CD4-positive, alpha-beta T cell (primary cell): ENCODE measurements at regions of chr1 and their contacts with region 1.

Region 1: GRCh38 chr1:211329764-211330201 is 3.1 kb downstream of the TRAF5 start:
- DNase-seq: peak in 3 of 14 experiments; percentile 37 to 40 (median 37)
- ATAC-seq: peak; percentile 37
- H3K4me3 ChIP-seq: peak overlapping the region; percentile 86
- H3K4me3 Mint-ChIP-seq: peak overlapping the region; percentile 95
- H3K27ac ChIP-seq: peak overlapping the region; percentile 68 to 72
- H3K27ac Mint-ChIP-seq: peak overlapping the region; percentile 83
- H3K4me1 ChIP-seq: peaks cover 86% of the 10 kb centered on the region
- H3K4me1 Mint-ChIP-seq: peaks cover 88% of the 10 kb centered on the region
- H3K27me3 ChIP-seq: no peaks in the 10 kb centered on the region
- H3K27me3 Mint-ChIP-seq: no peaks in the 10 kb centered on the region
- CTCF ChIP-seq: no peak

Region 2: GRCh38 chr1:211382714-211383480 is 53.1 kb after region 1 on chr1:
- CTCF ChIA-PET with region 1: no interaction called
- POLR2A ChIA-PET with region 1: interaction called, 16 read pairs
- intact Hi-C with region 1: loop called (anchors 2 to 10 kb)
- DNase-seq: peak; percentile 55 to 88 (median 73)
- ATAC-seq: peak; percentile 82
- H3K4me3 ChIP-seq: peak overlapping the region; percentile 92
- H3K4me3 Mint-ChIP-seq: peak overlapping the region; percentile 85
- H3K27ac ChIP-seq: peak overlapping the region; percentile 75 to 94
- H3K27ac Mint-ChIP-seq: peak overlapping the region; percentile 86
- H3K4me1 ChIP-seq: peaks cover 8% of the 10 kb centered on the region
- H3K4me1 Mint-ChIP-seq: peaks cover 35% of the 10 kb centered on the region
- H3K27me3 ChIP-seq: no peaks in the 10 kb centered on the region
- H3K27me3 Mint-ChIP-seq: no peaks in the 10 kb centered on the region
- CTCF ChIP-seq: no peak